Posterior cingulate gyrus (tissue), 11 donors: ENCODE measurements at regions of chr16 and their contacts with region 1.

Region 1: GRCh38 chr16:87028481-87029320 is 288.5 kb downstream of the C16orf95 start:
- DNase-seq: no peak

Region 2: GRCh38 chr16:85935974-85936760 is 1092.5 kb before region 1 on chr16:
- intact Hi-C with region 1: loop called (anchors 10 kb)
- DNase-seq: peak in 3 of 10 donors; percentile 22 to 67 (median 59)

Region 3: GRCh38 chr16:86709902-86710596 is 318.7 kb before region 1 on chr16:
- intact Hi-C with region 1: no loop called
- DNase-seq: peak in 1 of 10 donors; percentile 68